Activated B cell treated with CpG ODN at 0.5 μM for 24 hours (primary cell): ENCODE measurements at regions of chrX and their contacts with region 1.

Region 1: GRCh38 chrX:107710617-107711391 is 64.8 kb downstream of the TSC22D3 start:
- DNase-seq: peak; percentile 18
- ATAC-seq: peak; percentile 62
- H3K4me3 Mint-ChIP-seq: peak overlapping the region; percentile 78
- H3K27ac Mint-ChIP-seq: peak overlapping the region; percentile 99
- H3K4me1 Mint-ChIP-seq: peaks cover 52% of the 10 kb centered on the region
- H3K27me3 Mint-ChIP-seq: no peaks in the 10 kb centered on the region
- CTCF ChIP-seq: no peak

Region 2: DNA sequence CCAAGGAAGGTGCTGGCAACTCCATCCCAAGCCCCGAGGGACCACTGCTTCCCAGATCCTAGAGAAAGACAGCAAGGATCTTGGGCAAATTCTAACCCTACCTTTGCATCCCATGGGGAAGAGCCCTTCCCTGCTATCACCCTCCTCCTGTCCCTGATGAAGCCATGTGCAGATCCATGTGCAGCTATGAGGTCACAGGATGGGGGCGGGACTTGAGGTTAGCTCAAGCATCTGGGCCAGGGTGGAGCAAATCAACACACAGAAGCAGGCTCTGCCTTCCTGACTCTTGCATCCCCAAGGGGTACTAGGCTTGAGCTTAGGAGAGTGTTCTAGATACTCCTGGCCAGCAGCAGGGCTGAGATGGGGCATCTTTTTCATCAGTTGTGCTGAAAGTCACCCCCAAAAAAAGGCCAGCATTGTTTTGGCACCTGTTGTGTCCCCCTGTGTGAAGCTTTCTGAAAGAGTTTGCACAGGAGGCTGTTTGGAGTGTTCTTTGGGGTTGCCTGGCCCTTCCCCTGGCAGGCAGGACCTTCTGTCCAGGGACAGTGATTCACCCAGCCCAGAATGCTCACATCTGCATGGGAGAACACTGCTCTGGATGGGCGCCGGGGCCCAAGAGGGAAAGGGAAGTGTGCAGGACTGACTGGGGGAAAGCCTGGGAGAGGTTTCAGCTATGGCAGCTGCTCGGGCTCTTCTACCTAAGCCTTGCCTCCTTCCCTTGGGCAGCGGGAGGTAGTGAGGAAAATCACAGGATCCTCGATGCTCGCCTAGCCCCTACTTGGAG is 31.7 kb before region 1 on chrX:
- CTCF ChIA-PET with region 1: interaction called, 128 read pairs
- POLR2A ChIA-PET with region 1: interaction called, 440 read pairs
- intact Hi-C with region 1: loop called (anchors 1 kb)
- DNase-seq: peak; percentile 22
- ATAC-seq: peak; percentile 16
- H3K4me3 Mint-ChIP-seq: no peak overlapping the region
- H3K27ac Mint-ChIP-seq: peak overlapping the region; percentile 30
- H3K4me1 Mint-ChIP-seq: peaks cover 57% of the 10 kb centered on the region
- H3K27me3 Mint-ChIP-seq: no peaks in the 10 kb centered on the region
- CTCF ChIP-seq: no peak

Region 3: GRCh38 chrX:107924136-107924746 is 213.4 kb after region 1 on chrX:
- CTCF ChIA-PET with region 1: no interaction called
- POLR2A ChIA-PET with region 1: no interaction called
- intact Hi-C with region 1: no loop called
- DNase-seq: no peak
- ATAC-seq: no peak
- H3K4me3 Mint-ChIP-seq: no peak overlapping the region
- H3K27ac Mint-ChIP-seq: no peak overlapping the region
- H3K4me1 Mint-ChIP-seq: no peaks in the 10 kb centered on the region
- H3K27me3 Mint-ChIP-seq: no peaks in the 10 kb centered on the region
- CTCF ChIP-seq: no peak